WTC11 (cell line): ENCODE measurements at regions of chr11 and their contacts with region 1.

Region 1: GRCh38 chr11:82998697-82999096 is 73.0 kb downstream of the RAB30 start:
- DNase-seq: no peak
- ATAC-seq: peak; percentile 63
- H3K4me3 Mint-ChIP-seq: no peak overlapping the region
- H3K27ac Mint-ChIP-seq: no peak overlapping the region
- H3K4me1 Mint-ChIP-seq: peaks cover 19% of the 10 kb centered on the region
- H3K27me3 Mint-ChIP-seq: no peaks in the 10 kb centered on the region
- CTCF ChIP-seq: no peak

Region 2: GRCh38 chr11:82927254-82927880 is 71.3 kb before region 1 on chr11:
- CTCF ChIA-PET with region 1: interaction called, 13 read pairs
- POLR2A ChIA-PET with region 1: no interaction called
- DNase-seq: no peak
- ATAC-seq: peak; percentile 47
- H3K4me3 Mint-ChIP-seq: no peak overlapping the region
- H3K27ac Mint-ChIP-seq: no peak overlapping the region
- H3K4me1 Mint-ChIP-seq: peaks cover 2% of the 10 kb centered on the region; the same call in 1 of the 2 replicates
- H3K27me3 Mint-ChIP-seq: no peaks in the 10 kb centered on the region
- CTCF ChIP-seq: peak; percentile 75